ENCODE measurements at regions of chr18 and their contacts with region 1.

Region 1: GRCh38 chr18:62437235-62438017 is 85.4 kb upstream of the ZCCHC2 start:
- DNase-seq: peak in 1 of 2 donors; percentile 93
- H3K4me3 ChIP-seq: no peak overlapping the region
- H3K27ac ChIP-seq: peak overlapping the region; percentile 67
- H3K4me1 ChIP-seq: peaks cover 25% of the 10 kb centered on the region
- H3K27me3 ChIP-seq: no peaks in the 10 kb centered on the region
- CTCF ChIP-seq: no peak
- POLR2A ChIP-seq: no peak

Region 2: GRCh38 chr18:62522504-62523254 is 85.3 kb after region 1 on chr18 and contains the start of gene ZCCHC2:
- intact Hi-C with region 1: loop called (anchors 10 kb)
- DNase-seq: peak; percentile 99
- H3K4me3 ChIP-seq: peak within 1 kb of the TSS; percentile 64 to 80
- H3K27ac ChIP-seq: peak within 1 kb of the TSS; percentile 95
- H3K4me1 ChIP-seq: peaks cover 28% of the 10 kb centered on the region
- H3K27me3 ChIP-seq: no peaks in the 10 kb centered on the region
- CTCF ChIP-seq: no peak
- POLR2A ChIP-seq: peak; percentile 71 to 87
- total RNA-seq, gene ZCCHC2: 30.4 TPM

Measured in vagina (tissue), 2 donors.